A673 (cell line): ENCODE measurements at regions of chr1 and their contacts with region 1.

Region 1: GRCh38 chr1:57319165-57319564 is 104.7 kb downstream of the DAB1 start:
- DNase-seq: peak; percentile 50
- H3K4me3 ChIP-seq: no peak overlapping the region
- H3K27ac ChIP-seq: no peak overlapping the region
- H3K4me1 ChIP-seq: peaks cover 18% of the 10 kb centered on the region
- H3K27me3 ChIP-seq: no peaks in the 10 kb centered on the region
- CTCF ChIP-seq: no peak

Region 2: GRCh38 chr1:57033222-57034001 is 285.8 kb before region 1 on chr1:
- CTCF ChIA-PET with region 1: no interaction called
- POLR2A ChIA-PET with region 1: no interaction called
- intact Hi-C with region 1: no loop called
- DNase-seq: no peak
- H3K4me3 ChIP-seq: no peak overlapping the region
- H3K27ac ChIP-seq: no peak overlapping the region
- H3K4me1 ChIP-seq: no peaks in the 10 kb centered on the region
- H3K27me3 ChIP-seq: no peaks in the 10 kb centered on the region
- CTCF ChIP-seq: no peak

Region 3: DNA sequence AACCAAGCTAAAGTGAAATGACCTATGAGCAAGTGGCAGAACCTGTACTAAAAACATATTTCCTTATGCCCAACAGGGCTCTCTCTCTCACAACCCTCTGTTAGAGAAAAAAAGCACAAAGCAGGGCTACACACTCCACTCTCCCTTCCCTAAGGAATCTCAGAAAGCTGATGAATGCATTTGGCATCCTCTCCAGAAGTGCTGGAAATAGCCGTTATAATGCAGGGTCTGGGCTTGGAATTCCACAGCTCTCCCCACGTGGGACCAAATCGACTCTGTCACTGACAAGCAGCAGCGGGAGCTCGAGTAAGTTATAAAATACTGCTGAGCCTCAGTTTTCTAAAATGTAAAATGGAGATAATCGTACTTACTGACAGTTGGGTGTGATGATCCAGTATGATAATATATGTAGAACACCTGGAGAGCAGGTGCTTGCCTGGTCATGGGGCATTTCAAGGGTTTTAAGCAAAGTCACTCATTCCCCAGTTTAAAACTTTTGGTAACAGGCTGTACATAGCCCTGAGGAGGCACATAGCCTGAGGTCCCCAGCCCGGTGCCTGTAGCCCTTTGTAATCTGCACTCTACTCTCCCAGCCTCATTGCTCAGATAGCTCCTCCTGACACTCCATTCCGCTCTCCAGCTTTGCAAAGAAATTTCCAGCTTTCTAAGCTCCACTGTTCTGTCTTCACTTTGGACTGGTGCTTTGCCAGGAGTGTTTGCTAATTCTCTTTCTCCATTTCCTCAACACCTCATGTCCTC is 280.2 kb after region 1 on chr1:
- CTCF ChIA-PET with region 1: no interaction called
- POLR2A ChIA-PET with region 1: interaction called, 11 read pairs
- intact Hi-C with region 1: no loop called
- DNase-seq: no peak
- H3K4me3 ChIP-seq: no peak overlapping the region
- H3K27ac ChIP-seq: no peak overlapping the region
- H3K4me1 ChIP-seq: peaks cover 21% of the 10 kb centered on the region
- H3K27me3 ChIP-seq: no peaks in the 10 kb centered on the region
- CTCF ChIP-seq: no peak